B cell (primary cell): ENCODE measurements at regions of chr1 and their contacts with region 1.

Region 1: GRCh38 chr1:108746372-108747205 is at the start of gene STXBP3:
- DNase-seq: peak; percentile 99
- ATAC-seq: peak; percentile 93
- H3K4me3 ChIP-seq: peak within 1 kb of the TSS; percentile 41 to 99 (median 94)
- H3K4me3 Mint-ChIP-seq: peak within 1 kb of the TSS; percentile 98
- H3K27ac ChIP-seq: peak within 1 kb of the TSS; percentile 92 to 94
- H3K27ac Mint-ChIP-seq: peak within 1 kb of the TSS; percentile 100
- H3K4me1 ChIP-seq: peaks cover 4 to 5% of the 10 kb centered on the region in 2 donors
- H3K4me1 Mint-ChIP-seq: peaks cover 33% of the 10 kb centered on the region
- H3K27me3 ChIP-seq: no peaks in the 10 kb centered on the region
- H3K27me3 Mint-ChIP-seq: no peaks in the 10 kb centered on the region
- CTCF ChIP-seq: peak; percentile 94
- total RNA-seq, gene STXBP3: 77.5 and 78.1 TPM in 2 replicates

Region 2: DNA sequence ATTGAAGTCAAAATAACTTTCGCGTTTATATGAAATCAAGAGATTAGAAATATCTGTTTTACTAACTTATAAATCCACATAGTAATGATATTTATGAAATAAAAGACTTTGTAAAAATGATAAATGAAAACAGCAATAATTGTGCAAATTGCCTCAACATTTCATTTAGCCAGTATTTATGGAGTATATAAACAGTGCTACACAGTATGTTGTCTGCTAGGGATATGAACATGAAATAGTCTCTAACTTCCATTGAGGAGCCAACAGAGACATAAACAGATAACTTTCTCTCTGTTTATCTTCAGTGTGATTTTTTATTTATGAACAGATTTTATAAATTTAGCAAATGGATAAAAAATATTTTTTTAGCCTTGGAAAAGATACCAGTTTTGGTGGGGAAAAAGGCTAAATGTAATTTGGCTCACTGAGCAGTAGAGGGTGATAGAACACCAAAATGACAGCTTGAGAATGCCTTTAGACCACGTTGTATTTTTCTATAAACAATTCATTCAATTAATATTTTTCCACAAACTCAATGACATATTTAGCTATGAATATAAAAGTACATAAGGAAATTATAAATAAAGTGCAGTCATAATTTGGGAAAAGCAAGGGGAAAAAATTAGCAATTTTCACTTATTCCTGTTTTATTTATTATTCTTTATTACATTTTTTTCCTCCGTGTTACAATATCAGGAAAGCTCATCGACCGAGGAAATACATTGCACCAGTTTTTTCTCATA is 234.2 kb before region 1 on chr1:
- CTCF ChIA-PET with region 1: no interaction called
- POLR2A ChIA-PET with region 1: no interaction called
- intact Hi-C with region 1: loop called (anchors 5 kb)
- DNase-seq: peak; percentile 68
- ATAC-seq: peak; percentile 65
- H3K4me3 ChIP-seq: no peak overlapping the region
- H3K4me3 Mint-ChIP-seq: no peak overlapping the region
- H3K27ac ChIP-seq: no peak overlapping the region
- H3K27ac Mint-ChIP-seq: no peak overlapping the region
- H3K4me1 ChIP-seq: no peaks in the 10 kb centered on the region
- H3K4me1 Mint-ChIP-seq: no peaks in the 10 kb centered on the region
- H3K27me3 ChIP-seq: peaks cover 0 to 6% (median 0%) of the 10 kb centered on the region in 4 experiments
- H3K27me3 Mint-ChIP-seq: peaks cover 8% of the 10 kb centered on the region
- CTCF ChIP-seq: peak; percentile 97

Region 3: DNA sequence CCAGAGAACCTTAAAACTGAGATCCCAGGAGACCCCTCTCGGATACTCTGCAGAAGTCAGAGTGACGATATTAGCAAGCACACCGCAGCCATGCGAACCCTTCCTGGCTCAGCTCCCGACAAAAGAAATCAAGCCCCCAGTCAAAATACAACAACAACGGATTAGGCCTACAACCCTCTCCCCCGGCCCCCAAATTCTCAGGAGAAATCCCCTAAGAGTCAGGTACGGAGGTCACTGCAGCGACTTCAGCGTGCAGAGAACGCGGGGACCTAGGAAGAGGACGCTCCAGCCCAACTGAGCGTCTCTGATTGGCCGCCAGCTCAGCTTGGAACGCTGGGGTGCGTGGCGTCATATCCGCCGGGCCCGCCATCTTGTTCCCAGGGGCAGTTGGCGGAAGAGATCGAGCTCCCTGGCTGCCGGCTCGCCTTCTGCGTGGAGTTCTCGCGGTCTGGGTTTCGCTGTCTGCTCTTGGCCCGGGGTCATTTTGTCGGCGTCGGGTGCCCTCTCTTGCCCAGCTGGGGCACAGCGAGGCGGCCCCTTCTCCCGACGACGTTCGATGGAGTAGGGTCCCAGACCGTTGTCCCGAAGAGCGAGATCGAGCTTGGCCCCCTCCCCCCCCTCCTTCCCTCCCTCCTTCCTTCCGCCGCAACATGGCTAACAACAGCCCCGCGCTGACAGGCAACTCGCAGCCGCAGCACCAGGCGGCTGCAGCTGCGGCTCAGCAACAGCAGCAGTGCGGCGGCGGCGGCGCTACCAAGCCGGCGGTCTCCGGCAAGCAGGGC is 54.5 kb before region 1 on chr1 and contains the start of gene PRPF38B:
- CTCF ChIA-PET with region 1: no interaction called
- POLR2A ChIA-PET with region 1: interaction called, 6 read pairs
- intact Hi-C with region 1: loop called (anchors 1 kb)
- DNase-seq: peak; percentile 95
- ATAC-seq: peak; percentile 92
- H3K4me3 ChIP-seq: peak within 1 kb of the TSS; percentile 84 to 93 (median 90)
- H3K4me3 Mint-ChIP-seq: peak within 1 kb of the TSS; percentile 98
- H3K27ac ChIP-seq: peak within 1 kb of the TSS; percentile 96 to 99
- H3K27ac Mint-ChIP-seq: peak within 1 kb of the TSS; percentile 97
- H3K4me1 ChIP-seq: peaks cover 21 to 35% of the 10 kb centered on the region in 2 donors
- H3K4me1 Mint-ChIP-seq: peaks cover 43% of the 10 kb centered on the region
- H3K27me3 ChIP-seq: no peaks in the 10 kb centered on the region
- H3K27me3 Mint-ChIP-seq: peaks cover 3% of the 10 kb centered on the region
- CTCF ChIP-seq: no peak
- total RNA-seq, gene PRPF38B: 107 and 114 TPM in 2 replicates

Region 4: GRCh38 chr1:108897865-108898720 is 151.5 kb after region 1 on chr1:
- CTCF ChIA-PET with region 1: interaction called, 4 read pairs
- POLR2A ChIA-PET with region 1: no interaction called
- intact Hi-C with region 1: loop called (anchors 1 kb)
- DNase-seq: peak; percentile 66
- ATAC-seq: peak; percentile 62
- H3K4me3 ChIP-seq: no peak overlapping the region
- H3K4me3 Mint-ChIP-seq: no peak overlapping the region
- H3K27ac ChIP-seq: no peak overlapping the region
- H3K27ac Mint-ChIP-seq: no peak overlapping the region
- H3K4me1 ChIP-seq: no peaks in the 10 kb centered on the region
- H3K4me1 Mint-ChIP-seq: no peaks in the 10 kb centered on the region
- H3K27me3 ChIP-seq: no peaks in the 10 kb centered on the region
- H3K27me3 Mint-ChIP-seq: no peaks in the 10 kb centered on the region
- CTCF ChIP-seq: peak; percentile 77

Region 5: DNA sequence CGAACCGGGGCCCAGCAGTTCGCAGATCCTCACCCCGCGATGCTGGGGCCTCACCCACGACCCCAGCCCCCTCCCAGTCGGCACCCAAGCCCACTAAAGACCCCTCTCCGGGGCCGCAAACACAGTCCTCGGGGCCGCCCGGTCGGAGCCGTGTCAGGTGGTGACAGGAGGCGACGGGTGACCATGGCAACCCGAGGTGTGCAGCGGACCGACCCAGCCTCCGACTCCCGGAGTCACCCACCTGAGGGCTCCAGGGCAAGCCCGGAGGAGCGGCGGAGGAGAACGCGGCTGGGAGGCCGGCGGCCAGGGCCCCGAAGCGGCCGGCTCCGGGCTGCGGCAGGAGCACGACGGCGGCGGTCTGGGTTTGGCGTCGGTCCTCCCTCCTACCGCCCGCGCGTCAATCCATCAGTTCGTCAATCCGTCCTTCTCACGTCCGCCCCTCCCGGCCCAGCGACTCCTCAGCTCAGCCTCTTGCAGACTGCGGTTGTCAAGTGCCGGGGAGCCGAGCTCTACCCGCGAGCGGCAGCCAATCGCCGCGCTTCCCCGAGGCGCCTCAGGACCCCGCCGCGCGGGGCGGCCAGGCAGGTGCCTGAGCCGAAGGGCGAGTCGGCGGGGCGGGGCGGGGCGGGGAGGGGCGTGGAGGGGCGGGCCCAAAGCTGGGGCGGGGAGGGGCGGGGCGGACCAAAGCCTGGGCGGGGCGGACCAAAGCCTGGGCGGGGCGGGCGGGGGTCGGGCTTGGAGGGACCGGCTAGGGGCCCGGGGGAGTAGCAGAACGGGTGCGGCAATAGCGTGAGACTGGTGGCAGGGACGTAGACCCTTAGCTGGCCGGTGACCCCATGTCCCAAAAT is 295.3 kb after region 1 on chr1 and contains the start of gene WDR47:
- CTCF ChIA-PET with region 1: no interaction called
- POLR2A ChIA-PET with region 1: no interaction called
- intact Hi-C with region 1: loop called (anchors 2 kb)
- DNase-seq: peak; percentile 96
- ATAC-seq: peak; percentile 96
- H3K4me3 ChIP-seq: peak within 1 kb of the TSS; percentile 30 to 93 (median 92)
- H3K4me3 Mint-ChIP-seq: peak within 1 kb of the TSS; percentile 97
- H3K27ac ChIP-seq: peak within 1 kb of the TSS; percentile 67 to 75
- H3K27ac Mint-ChIP-seq: peak within 1 kb of the TSS; percentile 95
- H3K4me1 ChIP-seq: peaks cover 7% of the 10 kb centered on the region in 2 donors
- H3K4me1 Mint-ChIP-seq: peaks cover 16% of the 10 kb centered on the region
- H3K27me3 ChIP-seq: no peaks in the 10 kb centered on the region
- H3K27me3 Mint-ChIP-seq: peaks cover 3% of the 10 kb centered on the region
- CTCF ChIP-seq: no peak
- total RNA-seq, gene WDR47: 17.3 and 21.6 TPM in 2 replicates

Region 6: DNA sequence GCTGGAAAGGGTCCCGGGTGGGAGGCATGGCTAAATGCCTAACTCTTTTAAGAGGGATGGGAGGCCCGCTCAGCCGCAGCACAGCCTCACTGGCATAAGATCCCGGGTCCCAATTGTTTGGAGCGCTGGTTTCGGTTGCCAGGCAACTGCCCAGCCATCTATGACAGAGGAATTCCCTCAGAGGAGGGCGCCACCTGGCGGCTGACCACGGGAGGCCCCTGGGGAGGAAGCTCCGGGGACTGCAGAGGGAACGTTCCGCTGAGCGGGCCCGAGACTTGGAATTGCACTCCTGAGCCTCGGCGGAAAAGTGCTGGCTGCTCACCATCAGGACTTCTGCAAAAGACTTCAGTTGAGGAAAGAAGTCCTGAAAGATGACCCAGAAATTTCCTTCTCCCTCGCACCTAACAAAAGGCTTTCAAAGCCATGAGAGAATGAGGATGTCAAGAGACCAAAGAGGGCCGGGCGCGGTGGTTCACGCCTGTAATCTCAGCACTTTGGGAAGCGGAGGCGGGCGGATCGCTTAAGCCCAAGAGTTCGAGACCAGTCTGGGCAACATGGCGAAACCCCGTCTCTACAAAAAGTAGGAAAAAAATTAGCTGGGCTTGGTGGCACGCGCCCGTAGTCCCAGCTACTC is 366.2 kb after region 1 on chr1:
- CTCF ChIA-PET with region 1: no interaction called
- POLR2A ChIA-PET with region 1: no interaction called
- intact Hi-C with region 1: loop called (anchors 5 kb)
- DNase-seq: peak; percentile 91
- ATAC-seq: peak; percentile 69
- H3K4me3 ChIP-seq: peak overlapping the region; percentile 30 to 54 (median 37)
- H3K4me3 Mint-ChIP-seq: peak overlapping the region; percentile 85
- H3K27ac ChIP-seq: peak overlapping the region in 1 of 2 donors; percentile 45
- H3K27ac Mint-ChIP-seq: peak overlapping the region; percentile 75
- H3K4me1 ChIP-seq: peaks cover 25 to 26% of the 10 kb centered on the region in 2 donors
- H3K4me1 Mint-ChIP-seq: peaks cover 27% of the 10 kb centered on the region
- H3K27me3 ChIP-seq: peaks cover 0 to 23% (median 20%) of the 10 kb centered on the region in 4 experiments
- H3K27me3 Mint-ChIP-seq: peaks cover 31% of the 10 kb centered on the region
- CTCF ChIP-seq: peak; percentile 85

Region 7: DNA sequence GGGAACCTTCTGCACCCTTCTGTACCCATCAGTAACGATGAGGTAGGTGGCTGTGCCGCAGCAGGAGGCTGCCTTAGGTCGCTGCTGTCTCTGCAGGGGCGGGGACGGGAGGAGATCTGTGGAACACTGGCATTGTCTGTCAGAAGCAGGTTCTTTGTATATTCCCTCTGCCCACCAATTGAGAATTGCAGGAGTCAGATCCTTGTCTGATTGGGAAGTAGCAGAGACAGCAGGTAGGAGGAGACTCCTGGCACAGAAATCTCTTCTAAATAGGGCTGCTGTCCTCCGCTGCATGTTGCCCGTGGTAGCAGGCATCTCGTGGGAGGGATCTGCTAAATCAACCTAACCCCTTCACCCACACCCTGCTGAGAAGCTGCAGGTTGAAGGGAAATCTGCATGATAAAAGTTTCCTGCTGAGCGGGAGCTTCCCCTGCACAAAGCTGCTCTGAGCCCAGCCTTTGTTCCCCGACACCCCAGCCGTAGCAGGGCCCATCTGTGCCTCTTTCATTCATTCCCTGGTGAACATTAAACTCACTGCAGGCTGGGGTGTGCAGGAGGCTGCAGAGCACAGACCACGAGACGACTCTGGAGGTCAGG is 483.0 kb after region 1 on chr1:
- CTCF ChIA-PET with region 1: no interaction called
- POLR2A ChIA-PET with region 1: no interaction called
- intact Hi-C with region 1: no loop called
- DNase-seq: no peak
- ATAC-seq: no peak
- H3K4me3 ChIP-seq: no peak overlapping the region
- H3K4me3 Mint-ChIP-seq: no peak overlapping the region
- H3K27ac ChIP-seq: no peak overlapping the region
- H3K27ac Mint-ChIP-seq: no peak overlapping the region
- H3K4me1 ChIP-seq: no peaks in the 10 kb centered on the region
- H3K4me1 Mint-ChIP-seq: peaks cover 5% of the 10 kb centered on the region
- H3K27me3 ChIP-seq: no peaks in the 10 kb centered on the region
- H3K27me3 Mint-ChIP-seq: no peaks in the 10 kb centered on the region
- CTCF ChIP-seq: no peak

Region 8: GRCh38 chr1:109426278-109427170 is 679.9 kb after region 1 on chr1 and contains the start of gene PSMA5:
- CTCF ChIA-PET with region 1: no interaction called
- POLR2A ChIA-PET with region 1: no interaction called
- intact Hi-C with region 1: loop called (anchors 2 kb)
- DNase-seq: peak; percentile 97
- ATAC-seq: peak; percentile 95
- H3K4me3 ChIP-seq: peak within 1 kb of the TSS; percentile 72 to 98 (median 79)
- H3K4me3 Mint-ChIP-seq: peak within 1 kb of the TSS; percentile 98
- H3K27ac ChIP-seq: peak within 1 kb of the TSS; percentile 71 to 82
- H3K27ac Mint-ChIP-seq: peak within 1 kb of the TSS; percentile 98
- H3K4me1 ChIP-seq: peaks cover 13 to 19% of the 10 kb centered on the region in 2 donors
- H3K4me1 Mint-ChIP-seq: peaks cover 33% of the 10 kb centered on the region
- H3K27me3 ChIP-seq: no peaks in the 10 kb centered on the region
- H3K27me3 Mint-ChIP-seq: no peaks in the 10 kb centered on the region
- CTCF ChIP-seq: no peak
- total RNA-seq, gene PSMA5: 58.3 and 62.9 TPM in 2 replicates